Posterior vena cava (tissue), 2 donors: ENCODE measurements at regions of chr12 and their contacts with region 1.

Region 1: GRCh38 chr12:91910871-91911388 is 234.7 kb downstream of the BTG1 start:
- DNase-seq: no peak

Region 2: DNA sequence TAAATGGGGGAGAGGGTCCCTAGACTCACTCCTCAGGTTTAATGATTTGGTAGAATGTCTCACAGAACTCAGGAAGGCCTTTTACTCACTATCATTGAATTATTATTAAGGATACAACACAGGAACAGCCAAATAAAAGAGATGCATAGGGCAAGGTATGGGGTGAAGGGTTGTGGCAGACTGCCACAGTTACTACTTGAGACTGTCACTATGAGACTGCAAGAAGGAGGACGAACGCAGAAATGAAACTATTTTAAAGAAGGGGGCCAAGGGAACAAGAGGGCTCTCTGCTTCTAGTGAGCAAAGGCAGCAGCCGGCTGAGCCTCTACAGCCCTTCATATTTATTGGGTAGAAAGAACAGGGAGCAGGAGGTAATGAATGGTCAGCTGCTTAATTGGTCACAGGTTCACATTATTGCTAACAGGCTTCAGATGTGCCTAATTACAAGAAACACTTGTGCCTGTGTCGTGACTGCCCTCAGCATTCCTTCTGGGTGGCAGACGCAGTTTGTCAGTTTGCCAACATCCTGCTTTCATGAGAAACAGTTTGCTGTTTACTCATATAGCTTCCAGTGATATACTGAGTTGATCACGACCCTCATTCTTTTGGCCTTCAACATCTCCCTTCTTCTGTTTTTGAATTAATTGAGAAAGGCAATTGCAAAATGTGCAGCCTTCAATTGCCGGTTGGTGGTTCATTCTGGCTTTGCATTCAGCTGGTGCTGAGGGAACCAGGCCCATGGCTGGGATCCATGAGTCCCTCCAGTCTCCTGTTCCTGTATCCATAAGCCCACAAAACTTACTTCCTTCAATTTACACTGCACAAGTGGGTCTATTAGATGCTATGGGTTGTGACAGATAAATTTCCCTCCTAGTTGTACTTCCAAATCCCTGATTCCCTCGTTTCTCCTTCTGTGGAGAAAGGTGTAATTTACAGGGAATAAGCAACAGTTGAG is 709.1 kb after region 1 on chr12:
- intact Hi-C with region 1: loop called in 1 of 2 experiments (anchors 10 kb)
- DNase-seq: no peak